Naive thymus-derived CD4-positive, alpha-beta T cell (primary cell): ENCODE measurements at regions of chr5 and their contacts with region 1.

Region 1: GRCh38 chr5:73298772-73299630 is 126.0 kb downstream of the TMEM174 start:
- DNase-seq: peak in 1 of 9 donors; percentile 29
- ATAC-seq: no peak
- H3K4me3 ChIP-seq: no peak overlapping the region
- H3K4me3 Mint-ChIP-seq: peak overlapping the region in 8 of 10 donors; percentile 2 to 71 (median 34)
- H3K27ac ChIP-seq: no peak overlapping the region
- H3K27ac Mint-ChIP-seq: peak overlapping the region in 1 of 9 donors; percentile 75
- H3K4me1 ChIP-seq: no peaks in the 10 kb centered on the region
- H3K4me1 Mint-ChIP-seq: peaks cover 7 to 39% (median 28%) of the 10 kb centered on the region in 7 donors
- H3K27me3 ChIP-seq: peaks cover 10 to 21% of the 10 kb centered on the region in 2 donors
- H3K27me3 Mint-ChIP-seq: peaks cover 83 to 91% (median 86%) of the 10 kb centered on the region in 5 donors

Region 2: GRCh38 chr5:73215891-73216610 is 83.0 kb before region 1 on chr5:
- CTCF ChIA-PET with region 1: no interaction called
- POLR2A ChIA-PET with region 1: no interaction called
- intact Hi-C with region 1: loop called in 1 of 2 experiments (anchors 5 kb)
- DNase-seq: peak; percentile 28 to 64 (median 54)
- ATAC-seq: peak; percentile 93
- H3K4me3 ChIP-seq: peak overlapping the region; percentile 20
- H3K4me3 Mint-ChIP-seq: peak overlapping the region in 8 of 10 donors; percentile 21 to 73 (median 63)
- H3K27ac ChIP-seq: no peak overlapping the region
- H3K27ac Mint-ChIP-seq: no peak overlapping the region
- H3K4me1 ChIP-seq: no peaks in the 10 kb centered on the region
- H3K4me1 Mint-ChIP-seq: peaks cover 0 to 14% (median 6%) of the 10 kb centered on the region in 7 donors
- H3K27me3 ChIP-seq: peaks cover 11 to 15% of the 10 kb centered on the region in 2 donors
- H3K27me3 Mint-ChIP-seq: peaks cover 70 to 86% (median 81%) of the 10 kb centered on the region in 5 donors

Region 3: GRCh38 chr5:73233347-73234200 is 65.4 kb before region 1 on chr5:
- CTCF ChIA-PET with region 1: no interaction called
- POLR2A ChIA-PET with region 1: no interaction called
- intact Hi-C with region 1: loop called in 1 of 2 experiments (anchors 5 kb)
- DNase-seq: no peak
- ATAC-seq: no peak
- H3K4me3 ChIP-seq: peak overlapping the region; percentile 41
- H3K4me3 Mint-ChIP-seq: peak overlapping the region in 9 of 10 donors; percentile 59 to 85 (median 74)
- H3K27ac ChIP-seq: no peak overlapping the region
- H3K27ac Mint-ChIP-seq: no peak overlapping the region
- H3K4me1 ChIP-seq: peaks cover 3 to 18% of the 10 kb centered on the region in 2 donors
- H3K4me1 Mint-ChIP-seq: peaks cover 0 to 33% (median 28%) of the 10 kb centered on the region in 7 donors
- H3K27me3 ChIP-seq: peaks cover 4 to 41% of the 10 kb centered on the region in 2 donors
- H3K27me3 Mint-ChIP-seq: peaks cover 69 to 83% (median 80%) of the 10 kb centered on the region in 5 donors

Region 4: DNA sequence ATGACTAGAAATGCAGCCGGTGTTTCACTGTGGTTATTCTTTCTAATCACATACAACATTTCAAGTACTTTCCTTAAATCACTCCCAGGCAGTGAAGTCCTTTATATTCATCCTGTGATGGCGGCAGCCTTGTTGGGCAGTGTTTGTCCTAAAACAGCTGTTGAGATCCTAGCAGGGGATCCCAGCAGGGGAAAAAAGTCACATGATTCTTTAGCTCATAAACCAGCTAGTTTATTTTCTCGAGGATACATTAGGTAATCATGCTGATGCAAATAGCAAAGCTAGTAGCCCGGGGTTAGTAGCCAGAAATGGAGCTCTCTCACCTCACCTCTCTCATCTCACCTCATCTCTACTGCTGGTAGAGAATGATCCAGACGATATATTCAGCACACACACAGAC is 79.1 kb after region 1 on chr5:
- CTCF ChIA-PET with region 1: no interaction called
- POLR2A ChIA-PET with region 1: no interaction called
- intact Hi-C with region 1: loop called in 1 of 2 experiments (anchors 2 kb)
- DNase-seq: no peak
- ATAC-seq: no peak
- H3K4me3 ChIP-seq: no peak overlapping the region
- H3K4me3 Mint-ChIP-seq: no peak overlapping the region
- H3K27ac ChIP-seq: no peak overlapping the region
- H3K27ac Mint-ChIP-seq: no peak overlapping the region
- H3K4me1 ChIP-seq: peaks cover 6 to 15% of the 10 kb centered on the region in 2 donors
- H3K4me1 Mint-ChIP-seq: peaks cover 5 to 22% (median 15%) of the 10 kb centered on the region in 7 donors
- H3K27me3 ChIP-seq: peaks cover 14 to 46% of the 10 kb centered on the region in 2 donors
- H3K27me3 Mint-ChIP-seq: peaks cover 77 to 82% (median 80%) of the 10 kb centered on the region in 5 donors

Region 5: DNA sequence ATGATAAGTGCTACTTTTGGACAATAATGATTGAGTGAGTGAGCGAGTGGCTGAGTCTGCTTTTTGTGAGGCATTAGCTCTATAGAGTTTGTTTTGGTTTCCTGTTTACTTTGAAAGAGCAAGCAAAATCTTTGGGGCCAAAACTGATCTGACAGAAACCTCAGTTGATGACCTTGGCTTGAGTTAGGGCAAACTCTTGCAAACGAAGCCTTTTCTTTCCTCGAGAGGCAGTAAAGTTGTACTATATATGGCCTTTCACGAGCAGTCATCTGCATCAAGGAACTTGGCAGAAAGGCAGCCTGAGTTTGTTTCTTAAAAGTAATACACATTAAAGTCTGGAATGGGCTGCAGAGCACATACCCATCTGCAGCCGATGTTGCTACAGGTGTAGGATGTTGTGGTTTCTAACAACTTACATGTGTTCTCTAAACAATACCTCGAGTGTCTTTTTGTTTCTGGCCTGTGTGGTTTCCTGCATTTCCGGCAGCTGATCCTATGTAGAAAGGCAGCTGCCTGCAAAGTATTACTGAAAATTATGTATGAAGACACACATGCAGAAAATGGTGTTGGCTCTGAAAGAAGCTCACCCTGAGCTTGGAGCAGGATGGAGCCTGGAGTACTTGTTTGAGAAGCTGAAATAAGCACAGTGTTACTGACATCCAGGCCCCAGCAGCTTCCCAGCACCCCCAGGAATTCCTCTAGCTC is 88.8 kb after region 1 on chr5:
- CTCF ChIA-PET with region 1: no interaction called
- POLR2A ChIA-PET with region 1: no interaction called
- intact Hi-C with region 1: loop called in 1 of 2 experiments (anchors 2 kb)
- DNase-seq: peak in 8 of 9 donors; percentile 28 to 90 (median 82)
- ATAC-seq: peak; percentile 96
- H3K4me3 ChIP-seq: peak overlapping the region; percentile 3
- H3K4me3 Mint-ChIP-seq: peak overlapping the region; percentile 39 to 76 (median 72)
- H3K27ac ChIP-seq: no peak overlapping the region
- H3K27ac Mint-ChIP-seq: peak overlapping the region in 6 of 9 donors; percentile 1 to 81 (median 37)
- H3K4me1 ChIP-seq: peaks cover 20 to 31% of the 10 kb centered on the region in 2 donors
- H3K4me1 Mint-ChIP-seq: peaks cover 16 to 34% (median 24%) of the 10 kb centered on the region in 7 donors
- H3K27me3 ChIP-seq: peaks cover 8 to 11% of the 10 kb centered on the region in 2 donors
- H3K27me3 Mint-ChIP-seq: peaks cover 24 to 68% (median 35%) of the 10 kb centered on the region in 5 donors